HepG2 (cell line): ENCODE measurements at regions of chr20 and their contacts with region 1.

Region 1: GRCh38 chr20:36605399-36606157 is at the start of gene RAB5IF:
- DNase-seq: peak; percentile 99
- ATAC-seq: peak; percentile 94
- H3K4me3 ChIP-seq: peak within 1 kb of the TSS; percentile 88 to 98 (median 98)
- H3K27ac ChIP-seq: peak within 1 kb of the TSS; percentile 81
- H3K4me1 ChIP-seq: peaks cover 27% of the 10 kb centered on the region
- H3K27me3 ChIP-seq: no peaks in the 10 kb centered on the region; a peak in 1 of 5 replicates
- CTCF ChIP-seq: peak; percentile 100
- EP300 ChIP-seq: peak; percentile 59 to 80
- POLR2A ChIP-seq: peak; percentile 99 to 100
- RAD21 ChIP-seq: peak; percentile 96
- total RNA-seq, gene RAB5IF: 292 and 305 TPM in 2 replicates

Region 2: DNA sequence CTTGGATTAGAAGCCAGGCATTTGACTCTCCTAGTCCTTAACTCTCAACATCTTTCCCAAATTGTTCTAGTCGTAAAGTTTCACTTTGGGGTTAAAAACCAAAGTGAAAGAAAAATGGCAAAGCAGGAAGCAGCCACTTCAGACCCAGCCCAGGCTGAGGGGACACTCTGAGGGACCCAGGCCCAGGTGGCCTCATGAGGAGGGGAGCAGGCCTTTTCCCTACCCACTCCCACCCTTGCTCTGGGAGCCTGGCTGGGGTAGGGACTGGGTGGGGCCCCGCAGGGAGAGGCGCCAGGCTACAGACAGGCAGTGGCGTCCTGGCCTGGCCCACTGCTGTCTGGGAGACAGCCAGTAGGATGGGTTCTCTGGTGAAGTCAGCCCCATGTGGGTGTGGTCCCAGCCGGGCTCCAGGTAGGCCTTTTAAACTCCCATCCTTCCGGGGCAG is 132.9 kb before region 1 on chr20:
- CTCF ChIA-PET with region 1: no interaction called
- POLR2A ChIA-PET with region 1: no interaction called
- in situ Hi-C with region 1: no loop called
- intact Hi-C with region 1: loop called (anchors 1 kb)
- DNase-seq: no peak
- ATAC-seq: peak; percentile 20
- H3K4me3 ChIP-seq: no peak overlapping the region
- H3K27ac ChIP-seq: peak overlapping the region; percentile 24
- H3K4me1 ChIP-seq: peaks cover 73% of the 10 kb centered on the region
- H3K27me3 ChIP-seq: no peaks in the 10 kb centered on the region
- CTCF ChIP-seq: no peak
- EP300 ChIP-seq: no peak
- POLR2A ChIP-seq: no peak
- RAD21 ChIP-seq: no peak

Region 3: GRCh38 chr20:36499723-36500501 is 105.7 kb before region 1 on chr20:
- CTCF ChIA-PET with region 1: no interaction called
- POLR2A ChIA-PET with region 1: no interaction called
- in situ Hi-C with region 1: no loop called
- intact Hi-C with region 1: no loop called
- DNase-seq: no peak
- ATAC-seq: no peak; the same call in 2 of the 3 replicates
- H3K4me3 ChIP-seq: no peak overlapping the region
- H3K27ac ChIP-seq: no peak overlapping the region
- H3K4me1 ChIP-seq: peaks cover 6% of the 10 kb centered on the region; the same call in 1 of the 2 replicates
- H3K27me3 ChIP-seq: no peaks in the 10 kb centered on the region
- CTCF ChIP-seq: no peak
- EP300 ChIP-seq: no peak
- POLR2A ChIP-seq: no peak
- RAD21 ChIP-seq: no peak

Region 4: GRCh38 chr20:36573103-36573794 is 32.3 kb before region 1 on chr20 and contains the start of gene TGIF2:
- CTCF ChIA-PET with region 1: interaction called, 3 read pairs
- POLR2A ChIA-PET with region 1: interaction called, 167 read pairs
- in situ Hi-C with region 1: no loop called
- intact Hi-C with region 1: loop called (anchors 1 kb)
- DNase-seq: peak; percentile 92
- ATAC-seq: peak; percentile 72
- H3K4me3 ChIP-seq: peak within 1 kb of the TSS; percentile 86 to 90 (median 86)
- H3K27ac ChIP-seq: peak within 1 kb of the TSS; percentile 89
- H3K4me1 ChIP-seq: peaks cover 38% of the 10 kb centered on the region
- H3K27me3 ChIP-seq: no peaks in the 10 kb centered on the region; a peak in 1 of 5 replicates
- CTCF ChIP-seq: 0 out of 2 replicates have a peak, but pooled peaks have one; percentile 9
- EP300 ChIP-seq: peak; percentile 37 to 44
- POLR2A ChIP-seq: peak; percentile 83 to 84
- RAD21 ChIP-seq: peak; percentile 55
- total RNA-seq, gene TGIF2: 53.9 and 60.3 TPM in 2 replicates

Region 5: DNA sequence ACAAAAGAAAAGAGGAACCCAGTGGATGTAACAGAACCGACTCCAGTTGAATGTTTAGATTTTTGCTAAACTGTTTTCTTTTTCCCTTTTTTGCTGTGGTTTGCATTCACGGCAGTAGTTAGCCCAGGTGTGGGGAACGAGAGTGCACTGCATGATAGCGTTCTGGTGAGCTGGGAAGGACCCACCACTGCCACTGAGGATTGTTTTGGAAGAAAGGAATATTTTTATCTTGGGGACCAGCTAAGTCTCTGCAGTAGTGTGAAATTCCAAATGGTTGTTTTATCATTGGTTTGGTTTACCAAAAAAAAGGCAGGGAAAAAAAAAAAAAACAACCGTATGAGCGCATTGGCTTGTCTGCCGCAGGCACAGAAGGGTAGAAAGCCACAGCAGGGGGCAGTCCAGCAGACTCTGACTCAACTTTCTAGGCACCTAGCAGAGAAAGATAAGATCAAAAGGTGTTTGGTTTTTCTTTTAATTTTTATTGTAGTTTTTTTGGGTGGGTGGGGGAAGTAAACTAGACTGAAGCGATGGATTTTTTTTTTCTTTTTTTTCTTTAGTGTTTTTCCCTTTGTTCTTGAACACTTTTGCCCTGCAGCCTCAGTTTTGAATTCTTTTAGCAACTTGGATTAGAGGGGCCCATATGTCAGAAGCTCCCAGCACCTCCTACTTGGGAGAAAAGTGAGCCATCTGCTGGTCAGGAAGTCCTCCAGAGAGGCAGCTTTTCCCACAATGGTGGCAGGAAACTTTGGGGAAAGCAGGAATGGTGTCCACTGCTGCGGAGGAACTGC is 13.5 kb before region 1 on chr20:
- CTCF ChIA-PET with region 1: interaction called, 5 read pairs
- POLR2A ChIA-PET with region 1: interaction called, 38 read pairs
- in situ Hi-C with region 1: no loop called
- intact Hi-C with region 1: no loop called
- DNase-seq: peak; percentile 73
- ATAC-seq: peak; percentile 57
- H3K4me3 ChIP-seq: no peak overlapping the region
- H3K27ac ChIP-seq: no peak overlapping the region
- H3K4me1 ChIP-seq: no peaks in the 10 kb centered on the region
- H3K27me3 ChIP-seq: no peaks in the 10 kb centered on the region
- CTCF ChIP-seq: peak; percentile 79
- EP300 ChIP-seq: no peak
- POLR2A ChIP-seq: no peak
- RAD21 ChIP-seq: peak; percentile 69

Region 6: GRCh38 chr20:36629719-36630681 is 24.4 kb after region 1 on chr20:
- CTCF ChIA-PET with region 1: interaction called, 8 read pairs
- POLR2A ChIA-PET with region 1: interaction called, 54 read pairs
- in situ Hi-C with region 1: no loop called
- intact Hi-C with region 1: no loop called
- DNase-seq: no peak
- ATAC-seq: no peak
- H3K4me3 ChIP-seq: no peak overlapping the region
- H3K27ac ChIP-seq: no peak overlapping the region
- H3K4me1 ChIP-seq: peaks cover 37% of the 10 kb centered on the region
- H3K27me3 ChIP-seq: no peaks in the 10 kb centered on the region
- CTCF ChIP-seq: no peak
- EP300 ChIP-seq: no peak
- POLR2A ChIP-seq: no peak
- RAD21 ChIP-seq: no peak

Region 7: GRCh38 chr20:36745927-36746659 is 140.5 kb after region 1 on chr20 and contains the start of gene NDRG3:
- CTCF ChIA-PET with region 1: no interaction called
- POLR2A ChIA-PET with region 1: interaction called, 14 read pairs
- in situ Hi-C with region 1: loop called (anchors 5 kb)
- intact Hi-C with region 1: no loop called
- DNase-seq: peak; percentile 96
- ATAC-seq: peak; percentile 87
- H3K4me3 ChIP-seq: peak within 1 kb of the TSS; percentile 75 to 98 (median 93)
- H3K27ac ChIP-seq: peak within 1 kb of the TSS; percentile 70
- H3K4me1 ChIP-seq: peaks cover 18% of the 10 kb centered on the region
- H3K27me3 ChIP-seq: no peaks in the 10 kb centered on the region; a peak in 1 of 5 replicates
- CTCF ChIP-seq: 0 out of 2 replicates have a peak, but pooled peaks have one; percentile 4
- EP300 ChIP-seq: 0 out of 4 replicates have a peak, but pooled peaks of 1 of the 2 experiments have one; percentile 22
- POLR2A ChIP-seq: peak; percentile 83 to 84
- RAD21 ChIP-seq: no peak
- total RNA-seq, gene NDRG3: 36.0 and 43.3 TPM in 2 replicates